Activated T-helper 1 cell treated with anti-CD3 and anti-CD28 coated beads, Interleukin-12 subunit alpha, Interleukin-12 subunit beta, Interleukin-2, Interleukin-4 antibody, amounts not matched to agents 30 ng/mL and 10 ng/mL and 1 ng/mL, durations not matched to agents 14 hours and 24 hours and 36 hours (primary cell): ENCODE measurements at regions of chr17 and their contacts with region 1.

Region 1: GRCh38 chr17:7915611-7916382 is at the start of gene RNF227:
- DNase-seq: peak; percentile 77
- H3K4me3 Mint-ChIP-seq: peak within 1 kb of the TSS; percentile 92
- H3K27ac Mint-ChIP-seq: peak within 1 kb of the TSS; percentile 96
- H3K4me1 Mint-ChIP-seq: peaks cover 33% of the 10 kb centered on the region
- H3K27me3 Mint-ChIP-seq: no peaks in the 10 kb centered on the region
- total RNA-seq, gene RNF227: 6.2 and 6.3 TPM in 2 replicates

Region 2: GRCh38 chr17:7844292-7845154 is 71.3 kb before region 1 on chr17:
- intact Hi-C with region 1: loop called (anchors 1 kb)
- DNase-seq: peak; percentile 87
- H3K4me3 Mint-ChIP-seq: peak overlapping the region; percentile 89
- H3K27ac Mint-ChIP-seq: peak overlapping the region; percentile 96
- H3K4me1 Mint-ChIP-seq: peaks cover 37% of the 10 kb centered on the region
- H3K27me3 Mint-ChIP-seq: no peaks in the 10 kb centered on the region

Region 3: GRCh38 chr17:7856883-7857723 is 58.7 kb before region 1 on chr17 and contains the start of gene NAA38:
- intact Hi-C with region 1: loop called (anchors 1 kb)
- DNase-seq: peak; percentile 92
- H3K4me3 Mint-ChIP-seq: no peak within 1 kb of the TSS
- H3K27ac Mint-ChIP-seq: no peak within 1 kb of the TSS
- H3K4me1 Mint-ChIP-seq: no peaks in the 10 kb centered on the region
- H3K27me3 Mint-ChIP-seq: no peaks in the 10 kb centered on the region
- total RNA-seq, gene NAA38: 36.4 and 43.5 TPM in 2 replicates

Region 4: DNA sequence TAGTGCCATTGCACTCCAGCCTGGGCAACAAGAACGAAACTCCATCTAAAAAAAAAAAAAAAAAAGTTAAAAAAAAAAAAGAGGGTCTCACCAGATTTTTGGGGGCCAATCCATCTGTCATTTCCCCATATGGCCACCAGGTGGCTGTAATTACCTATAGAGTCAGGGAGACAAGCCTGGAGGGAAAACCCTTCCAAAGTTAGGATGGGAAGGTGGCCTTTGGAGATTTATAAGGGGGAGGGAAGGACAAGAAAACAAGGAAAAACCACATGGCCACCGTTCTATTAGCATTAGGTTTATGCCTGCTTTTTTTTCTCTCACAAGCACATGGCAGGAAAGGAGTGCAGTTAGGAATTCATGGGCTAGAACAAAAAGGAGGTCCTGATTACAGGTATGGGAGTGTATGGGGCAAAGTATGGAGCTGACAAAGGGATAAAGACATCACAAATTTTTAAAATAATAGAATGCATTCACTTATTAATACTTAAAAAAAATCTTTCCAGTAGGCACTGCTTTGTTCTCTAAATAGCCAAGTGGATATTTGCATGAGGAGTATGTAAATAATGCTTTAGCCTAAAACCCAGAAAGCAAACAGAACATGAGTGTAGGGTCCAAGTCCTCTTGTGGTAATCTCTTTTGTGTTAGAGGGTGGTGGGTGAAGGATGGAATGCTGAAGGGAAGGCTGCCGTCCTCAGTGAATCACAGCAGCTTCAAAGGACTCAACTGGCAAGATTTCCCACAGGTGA is 52.9 kb before region 1 on chr17:
- intact Hi-C with region 1: loop called (anchors 1 kb)
- DNase-seq: no peak
- H3K4me3 Mint-ChIP-seq: no peak overlapping the region
- H3K27ac Mint-ChIP-seq: no peak overlapping the region
- H3K4me1 Mint-ChIP-seq: peaks cover 13% of the 10 kb centered on the region
- H3K27me3 Mint-ChIP-seq: no peaks in the 10 kb centered on the region

Region 5: DNA sequence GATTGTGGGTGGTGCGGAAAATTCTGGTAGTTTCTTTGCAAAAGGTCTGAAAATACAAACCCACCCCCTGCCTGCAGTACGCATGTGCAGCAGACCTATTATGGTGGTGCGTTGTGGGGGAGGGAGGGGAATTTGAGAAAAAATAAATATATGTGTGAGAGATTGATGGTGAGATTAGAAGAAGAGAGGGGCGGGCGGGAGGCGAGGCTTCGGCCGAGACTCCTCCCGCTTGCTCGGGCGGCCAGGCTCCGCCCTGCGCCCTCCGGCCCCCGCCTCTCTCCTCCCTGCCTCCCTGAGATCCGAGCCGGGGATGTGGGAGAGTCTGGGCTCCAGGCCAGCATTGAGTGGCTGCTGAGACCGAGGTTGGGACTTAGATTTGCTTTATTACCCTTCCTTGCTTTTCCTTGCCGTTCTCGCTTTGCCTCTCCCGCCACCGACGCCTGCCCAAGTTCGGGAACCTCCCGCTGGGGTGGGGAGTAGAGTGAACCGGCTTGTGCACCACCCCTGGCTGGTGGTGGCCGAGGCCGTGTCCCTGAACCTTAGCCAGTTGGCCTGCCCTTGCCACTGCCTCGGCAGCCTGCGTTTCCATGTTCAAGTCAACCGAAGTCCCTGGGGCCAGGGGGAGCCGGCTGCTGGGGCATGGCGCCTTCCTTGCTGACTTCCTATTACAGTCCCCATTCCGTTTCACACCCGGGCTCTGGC is 28.2 kb before region 1 on chr17:
- intact Hi-C with region 1: loop called (anchors 1 kb)
- DNase-seq: peak; percentile 77
- H3K4me3 Mint-ChIP-seq: no peak overlapping the region
- H3K27ac Mint-ChIP-seq: no peak overlapping the region
- H3K4me1 Mint-ChIP-seq: peaks cover 3% of the 10 kb centered on the region
- H3K27me3 Mint-ChIP-seq: no peaks in the 10 kb centered on the region

Region 6: GRCh38 chr17:7951143-7951803 is 35.5 kb after region 1 on chr17:
- intact Hi-C with region 1: loop called (anchors 2 kb)
- DNase-seq: peak; percentile 44
- H3K4me3 Mint-ChIP-seq: peak overlapping the region; percentile 40
- H3K27ac Mint-ChIP-seq: peak overlapping the region; percentile 91
- H3K4me1 Mint-ChIP-seq: peaks cover 15% of the 10 kb centered on the region
- H3K27me3 Mint-ChIP-seq: no peaks in the 10 kb centered on the region

Region 7: GRCh38 chr17:8016632-8017478 is 101.1 kb after region 1 on chr17:
- intact Hi-C with region 1: no loop called
- DNase-seq: peak; percentile 44
- H3K4me3 Mint-ChIP-seq: peak overlapping the region; percentile 81
- H3K27ac Mint-ChIP-seq: no peak overlapping the region
- H3K4me1 Mint-ChIP-seq: peaks cover 12% of the 10 kb centered on the region
- H3K27me3 Mint-ChIP-seq: peaks cover 30% of the 10 kb centered on the region

Region 8: GRCh38 chr17:8041249-8041928 is 125.6 kb after region 1 on chr17:
- intact Hi-C with region 1: loop called (anchors 1 kb)
- DNase-seq: peak; percentile 20
- H3K4me3 Mint-ChIP-seq: no peak overlapping the region
- H3K27ac Mint-ChIP-seq: no peak overlapping the region
- H3K4me1 Mint-ChIP-seq: no peaks in the 10 kb centered on the region
- H3K27me3 Mint-ChIP-seq: peaks cover 26% of the 10 kb centered on the region